Sigmoid colon (tissue), 7 donors: ENCODE measurements at regions of chr3 and their contacts with region 1.

Region 1: GRCh38 chr3:182980204-182981037 is at the start of gene DCUN1D1:
- DNase-seq: peak; percentile 94
- H3K4me3 ChIP-seq: peak within 1 kb of the TSS; percentile 63 to 100 (median 99)
- H3K27ac ChIP-seq: peak within 1 kb of the TSS; percentile 87 to 95 (median 94)
- H3K4me1 ChIP-seq: peaks cover 0 to 25% (median 22%) of the 10 kb centered on the region in 4 donors
- H3K27me3 ChIP-seq: no peaks in the 10 kb centered on the region
- CTCF ChIP-seq: no peak
- EP300 ChIP-seq: no peak
- POLR2A ChIP-seq: no peak
- total RNA-seq, gene DCUN1D1: 41.0 to 47.1 (median 43.7) TPM

Region 2: DNA sequence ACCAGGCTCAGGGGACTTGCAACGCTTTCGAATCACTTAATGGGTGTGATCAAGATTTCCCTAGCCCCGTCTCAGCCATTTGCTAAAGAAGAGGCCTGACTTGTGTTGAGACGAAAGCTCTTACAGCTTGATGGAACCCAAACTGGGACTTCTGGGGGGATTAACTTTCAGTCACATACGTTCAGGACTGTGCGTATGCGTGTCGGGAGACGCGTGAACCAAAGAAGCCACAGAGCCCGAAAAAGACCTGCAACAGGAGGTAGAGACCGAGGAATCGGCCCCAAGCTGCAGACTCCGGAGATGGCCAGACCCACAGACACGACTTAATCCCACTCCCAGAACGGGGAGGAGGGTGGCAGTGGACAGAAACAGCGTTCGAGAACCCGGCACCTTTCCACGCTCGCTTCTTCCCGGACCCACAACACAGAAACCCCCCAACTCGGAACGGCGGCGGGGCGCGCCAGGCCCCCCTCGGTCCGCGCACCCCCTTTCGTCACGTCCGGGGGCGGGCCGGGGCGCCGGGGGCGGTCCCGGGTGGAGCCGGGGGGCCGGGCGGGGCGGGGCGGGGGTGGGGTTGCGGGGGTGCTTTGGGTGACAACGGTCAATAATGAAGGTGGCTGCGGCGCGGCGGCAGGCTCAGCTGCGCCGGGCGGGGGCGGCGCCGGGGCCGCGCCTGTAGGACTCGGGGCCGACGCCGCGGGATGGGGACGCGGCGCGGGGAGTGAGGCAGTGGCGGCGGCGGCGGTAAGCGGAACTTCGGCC is 187.3 kb before region 1 on chr3 and contains the start of gene ATP11B:
- intact Hi-C with region 1: loop called (anchors 1 kb)
- DNase-seq: peak; percentile 80
- H3K4me3 ChIP-seq: peak within 1 kb of the TSS; percentile 68 to 98 (median 90)
- H3K27ac ChIP-seq: peak within 1 kb of the TSS; percentile 90 to 97 (median 96)
- H3K4me1 ChIP-seq: peaks cover 0 to 33% (median 20%) of the 10 kb centered on the region in 4 donors
- H3K27me3 ChIP-seq: no peaks in the 10 kb centered on the region
- CTCF ChIP-seq: no peak
- EP300 ChIP-seq: no peak
- POLR2A ChIP-seq: peak; percentile 69
- total RNA-seq, gene ATP11B: 41.8 to 69.9 (median 47.7) TPM

Region 3: GRCh38 chr3:183099026-183099837 is 118.8 kb after region 1 on chr3 and contains the start of gene MCCC1:
- intact Hi-C with region 1: loop called (anchors 5 kb)
- DNase-seq: peak; percentile 99
- H3K4me3 ChIP-seq: peak within 1 kb of the TSS; percentile 64 to 95 (median 80)
- H3K27ac ChIP-seq: peak within 1 kb of the TSS; percentile 83 to 93 (median 91)
- H3K4me1 ChIP-seq: peaks cover 0 to 22% (median 16%) of the 10 kb centered on the region in 4 donors
- H3K27me3 ChIP-seq: no peaks in the 10 kb centered on the region
- CTCF ChIP-seq: no peak
- EP300 ChIP-seq: peak in 2 of 4 donors; percentile 32 to 79
- POLR2A ChIP-seq: peak; percentile 45 to 70
- total RNA-seq, gene MCCC1: 19.7 to 28.2 (median 21.5) TPM